ENCODE measurements at regions of chr16 and their contacts with region 1.

Region 1: GRCh38 chr16:89490387-89491237 is at the start of gene ANKRD11:
- DNase-seq: peak; percentile 99 to 100 (median 99)
- ATAC-seq: peak; percentile 93
- H3K4me3 ChIP-seq: peak within 1 kb of the TSS; percentile 92
- H3K4me3 Mint-ChIP-seq: peak within 1 kb of the TSS; percentile 89 to 98 (median 94)
- H3K27ac ChIP-seq: peak within 1 kb of the TSS; percentile 90
- H3K27ac Mint-ChIP-seq: peak within 1 kb of the TSS; percentile 92 to 99 (median 97)
- H3K4me1 ChIP-seq: peaks cover 44 to 48% of the 10 kb centered on the region in 2 donors
- H3K4me1 Mint-ChIP-seq: peaks cover 48 to 73% (median 53%) of the 10 kb centered on the region in 7 donors
- H3K27me3 ChIP-seq: no peaks in the 10 kb centered on the region
- H3K27me3 Mint-ChIP-seq: peaks cover 0 to 2% (median 0%) of the 10 kb centered on the region in 5 donors
- total RNA-seq, gene ANKRD11: 178 to 254 (median 240) TPM

Region 2: GRCh38 chr16:88811769-88812512 is 678.7 kb before region 1 on chr16 and contains the start of gene APRT:
- CTCF ChIA-PET with region 1: no interaction called
- POLR2A ChIA-PET with region 1: no interaction called
- intact Hi-C with region 1: loop called in 1 of 2 experiments (anchors 1 kb)
- DNase-seq: peak; percentile 92 to 100 (median 98)
- ATAC-seq: peak; percentile 95
- H3K4me3 ChIP-seq: peak within 1 kb of the TSS; percentile 97
- H3K4me3 Mint-ChIP-seq: peak within 1 kb of the TSS; percentile 92 to 99 (median 96)
- H3K27ac ChIP-seq: peak within 1 kb of the TSS; percentile 84
- H3K27ac Mint-ChIP-seq: peak within 1 kb of the TSS; percentile 79 to 98 (median 95)
- H3K4me1 ChIP-seq: peaks cover 8 to 11% of the 10 kb centered on the region in 2 donors
- H3K4me1 Mint-ChIP-seq: peaks cover 0 to 26% (median 12%) of the 10 kb centered on the region in 7 donors
- H3K27me3 ChIP-seq: no peaks in the 10 kb centered on the region
- H3K27me3 Mint-ChIP-seq: no peaks in the 10 kb centered on the region
- total RNA-seq, gene APRT: 134 to 178 (median 161) TPM

Region 3: GRCh38 chr16:89300311-89300975 is 190.2 kb before region 1 on chr16:
- CTCF ChIA-PET with region 1: no interaction called
- POLR2A ChIA-PET with region 1: no interaction called
- intact Hi-C with region 1: no loop called
- DNase-seq: no peak
- ATAC-seq: no peak
- H3K4me3 ChIP-seq: no peak overlapping the region
- H3K4me3 Mint-ChIP-seq: no peak overlapping the region
- H3K27ac ChIP-seq: no peak overlapping the region
- H3K27ac Mint-ChIP-seq: peak overlapping the region in 1 of 9 donors; percentile 51
- H3K4me1 ChIP-seq: peaks cover 10 to 17% of the 10 kb centered on the region in 2 donors
- H3K4me1 Mint-ChIP-seq: peaks cover 39 to 66% (median 59%) of the 10 kb centered on the region in 7 donors
- H3K27me3 ChIP-seq: no peaks in the 10 kb centered on the region
- H3K27me3 Mint-ChIP-seq: no peaks in the 10 kb centered on the region

Region 4: DNA sequence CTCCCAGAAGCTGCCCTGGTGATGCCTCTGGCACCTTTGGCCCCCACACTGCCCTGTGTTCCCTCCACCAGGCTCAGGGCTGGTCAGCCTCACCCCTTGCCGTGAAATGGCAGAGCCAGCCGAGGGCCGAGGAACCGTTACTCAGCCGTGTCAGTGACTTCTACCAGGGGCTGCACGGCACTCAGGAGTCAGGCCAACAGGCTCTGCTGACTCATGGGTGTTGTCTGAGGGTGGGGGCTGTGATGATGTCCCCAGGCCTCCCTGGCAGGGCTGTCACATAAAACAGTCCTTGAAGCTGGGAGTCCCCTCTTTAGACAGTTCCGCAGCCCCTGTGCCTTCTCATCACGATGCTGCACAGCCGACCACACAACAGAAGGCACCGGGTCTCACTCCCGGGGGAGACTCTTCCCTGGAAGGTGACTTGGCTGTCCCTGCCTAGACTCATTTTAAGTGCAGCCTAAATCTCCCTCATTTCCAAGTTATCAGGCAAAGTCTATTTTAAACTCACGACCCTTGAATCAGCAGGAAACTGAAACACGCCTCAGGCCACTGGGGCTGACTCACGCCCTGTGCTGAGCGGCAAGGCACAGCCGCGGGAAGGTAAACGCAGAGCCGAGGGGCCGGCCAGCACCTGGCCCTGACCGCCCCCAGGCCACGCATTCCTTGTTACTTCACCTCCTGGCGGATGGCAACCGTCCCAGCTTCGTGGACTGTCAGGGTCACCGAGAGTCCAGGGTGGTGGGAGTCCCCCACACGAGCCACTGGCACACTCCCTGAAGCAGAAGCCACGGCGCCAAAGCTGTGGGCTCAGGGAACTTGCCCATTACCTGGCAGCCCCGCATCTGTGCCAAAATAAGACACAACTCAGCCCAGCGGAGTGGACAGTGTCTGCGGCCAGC is 170.5 kb before region 1 on chr16:
- CTCF ChIA-PET with region 1: no interaction called
- POLR2A ChIA-PET with region 1: interaction called, 14 read pairs
- intact Hi-C with region 1: loop called (anchors 1 to 2 kb)
- DNase-seq: peak in 1 of 9 donors; percentile 59
- ATAC-seq: no peak
- H3K4me3 ChIP-seq: no peak overlapping the region
- H3K4me3 Mint-ChIP-seq: peak overlapping the region in 9 of 10 donors; percentile 36 to 78 (median 48)
- H3K27ac ChIP-seq: no peak overlapping the region
- H3K27ac Mint-ChIP-seq: peak overlapping the region in 7 of 9 donors; percentile 21 to 82 (median 54)
- H3K4me1 ChIP-seq: peaks cover 81 to 94% of the 10 kb centered on the region in 2 donors
- H3K4me1 Mint-ChIP-seq: peaks cover 80 to 97% (median 93%) of the 10 kb centered on the region in 7 donors
- H3K27me3 ChIP-seq: no peaks in the 10 kb centered on the region
- H3K27me3 Mint-ChIP-seq: no peaks in the 10 kb centered on the region

Region 5: GRCh38 chr16:89334988-89335802 is 155.4 kb before region 1 on chr16:
- CTCF ChIA-PET with region 1: interaction called, 5 read pairs
- POLR2A ChIA-PET with region 1: interaction called, 3 read pairs
- intact Hi-C with region 1: loop called (anchors 1 to 5 kb)
- DNase-seq: no peak
- ATAC-seq: no peak
- H3K4me3 ChIP-seq: no peak overlapping the region
- H3K4me3 Mint-ChIP-seq: peak overlapping the region in 7 of 10 donors; percentile 28 to 75 (median 57)
- H3K27ac ChIP-seq: peak overlapping the region; percentile 32
- H3K27ac Mint-ChIP-seq: peak overlapping the region in 8 of 9 donors; percentile 13 to 90 (median 68)
- H3K4me1 ChIP-seq: peaks cover 42 to 64% of the 10 kb centered on the region in 2 donors
- H3K4me1 Mint-ChIP-seq: peaks cover 57 to 87% (median 74%) of the 10 kb centered on the region in 7 donors
- H3K27me3 ChIP-seq: no peaks in the 10 kb centered on the region
- H3K27me3 Mint-ChIP-seq: no peaks in the 10 kb centered on the region

Region 6: GRCh38 chr16:89410794-89411309 is 79.8 kb before region 1 on chr16:
- CTCF ChIA-PET with region 1: interaction called, 3 read pairs
- POLR2A ChIA-PET with region 1: interaction called, 17 read pairs
- intact Hi-C with region 1: loop called (anchors 2 kb)
- DNase-seq: peak in 3 of 9 donors; percentile 17 to 34 (median 26)
- ATAC-seq: peak; percentile 28
- H3K4me3 ChIP-seq: no peak overlapping the region
- H3K4me3 Mint-ChIP-seq: peak overlapping the region; percentile 6 to 86 (median 76)
- H3K27ac ChIP-seq: peak overlapping the region; percentile 72
- H3K27ac Mint-ChIP-seq: peak overlapping the region; percentile 89 to 96 (median 93)
- H3K4me1 ChIP-seq: peaks cover 70 to 84% of the 10 kb centered on the region in 2 donors
- H3K4me1 Mint-ChIP-seq: peaks cover 71 to 92% (median 78%) of the 10 kb centered on the region in 7 donors
- H3K27me3 ChIP-seq: no peaks in the 10 kb centered on the region
- H3K27me3 Mint-ChIP-seq: no peaks in the 10 kb centered on the region

Region 7: DNA sequence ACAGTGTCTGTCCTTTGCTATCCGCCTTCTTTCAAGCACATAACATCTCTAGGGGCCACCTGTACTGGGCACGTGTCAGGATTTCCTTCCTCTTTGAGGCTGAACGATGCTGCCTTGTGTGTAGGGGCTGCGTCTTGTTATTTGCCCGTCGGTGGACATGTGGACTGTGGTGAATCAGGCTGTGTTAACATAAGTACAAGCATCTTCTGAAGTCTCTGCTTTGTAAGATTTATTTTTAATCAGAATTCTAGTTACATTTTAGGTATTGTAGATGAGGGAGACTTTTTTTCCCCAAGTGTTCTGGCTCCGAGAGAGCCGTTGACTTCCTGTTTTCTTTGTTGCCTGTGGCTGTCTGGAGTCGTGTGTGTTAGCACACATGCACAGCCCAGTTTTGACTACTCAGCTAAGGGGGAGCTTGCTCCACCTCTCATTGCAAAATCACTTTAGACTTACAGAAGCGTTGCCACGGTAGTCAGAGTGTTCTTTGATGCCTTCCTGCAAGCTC is 43.7 kb after region 1 on chr16:
- CTCF ChIA-PET with region 1: no interaction called
- POLR2A ChIA-PET with region 1: interaction called, 7 read pairs
- intact Hi-C with region 1: loop called in 1 of 2 experiments (anchors 1 kb)
- DNase-seq: peak in 7 of 9 donors; percentile 60 to 80 (median 74)
- ATAC-seq: peak; percentile 96
- H3K4me3 ChIP-seq: peak overlapping the region; percentile 5
- H3K4me3 Mint-ChIP-seq: peak overlapping the region; percentile 57 to 83 (median 72)
- H3K27ac ChIP-seq: peak overlapping the region; percentile 49
- H3K27ac Mint-ChIP-seq: peak overlapping the region; percentile 91 to 100 (median 94)
- H3K4me1 ChIP-seq: peaks cover 9 to 22% of the 10 kb centered on the region in 2 donors
- H3K4me1 Mint-ChIP-seq: peaks cover 17 to 27% (median 24%) of the 10 kb centered on the region in 7 donors
- H3K27me3 ChIP-seq: no peaks in the 10 kb centered on the region
- H3K27me3 Mint-ChIP-seq: no peaks in the 10 kb centered on the region